GM13976 (cell line): ENCODE measurements at regions of chr5 and their contacts with region 1.

Region 1: DNA sequence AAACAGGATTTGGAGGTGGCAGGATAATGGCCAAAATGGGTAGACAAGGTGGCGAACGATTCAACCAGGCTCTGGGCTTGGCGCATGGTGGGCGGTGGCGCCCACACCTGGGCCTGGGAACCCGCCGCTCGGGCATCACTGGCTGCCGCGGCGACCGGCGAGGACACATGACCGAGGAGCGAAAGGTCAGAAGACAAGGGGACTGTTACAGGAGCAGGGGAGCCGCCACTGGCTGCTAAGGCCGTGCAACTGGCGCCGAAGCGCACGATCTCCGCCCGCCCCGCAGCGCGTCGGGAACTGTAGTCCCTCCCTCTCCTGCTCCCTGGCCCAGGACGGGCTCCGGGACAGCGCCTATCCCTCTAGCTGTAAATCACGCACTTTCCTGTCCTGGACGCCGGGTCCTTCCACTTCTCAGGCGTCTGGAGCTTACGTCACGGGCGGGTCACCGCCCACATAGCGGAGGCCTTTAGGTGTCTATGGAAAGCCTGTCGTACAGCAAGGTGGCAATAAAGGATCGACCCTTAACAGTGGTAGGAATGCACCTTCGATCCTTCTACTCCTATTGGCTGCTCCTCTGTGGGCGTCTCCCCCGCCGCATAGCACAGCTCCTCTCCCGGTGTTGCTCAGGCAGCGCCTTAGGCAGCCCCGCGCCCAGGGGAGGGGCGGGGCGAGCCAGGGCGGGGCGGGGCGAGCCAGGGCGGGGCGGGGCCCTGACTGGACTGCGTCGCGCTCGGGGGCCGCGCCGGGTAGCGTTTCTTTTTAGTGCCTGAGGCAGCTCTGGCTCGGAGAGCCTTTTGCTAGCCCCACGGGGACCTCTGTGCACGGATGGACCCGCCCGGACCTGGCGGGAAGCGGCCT is at the start of gene ICE1:
- DNase-seq: peak; percentile 92
- CTCF ChIP-seq: no peak

Region 2: DNA sequence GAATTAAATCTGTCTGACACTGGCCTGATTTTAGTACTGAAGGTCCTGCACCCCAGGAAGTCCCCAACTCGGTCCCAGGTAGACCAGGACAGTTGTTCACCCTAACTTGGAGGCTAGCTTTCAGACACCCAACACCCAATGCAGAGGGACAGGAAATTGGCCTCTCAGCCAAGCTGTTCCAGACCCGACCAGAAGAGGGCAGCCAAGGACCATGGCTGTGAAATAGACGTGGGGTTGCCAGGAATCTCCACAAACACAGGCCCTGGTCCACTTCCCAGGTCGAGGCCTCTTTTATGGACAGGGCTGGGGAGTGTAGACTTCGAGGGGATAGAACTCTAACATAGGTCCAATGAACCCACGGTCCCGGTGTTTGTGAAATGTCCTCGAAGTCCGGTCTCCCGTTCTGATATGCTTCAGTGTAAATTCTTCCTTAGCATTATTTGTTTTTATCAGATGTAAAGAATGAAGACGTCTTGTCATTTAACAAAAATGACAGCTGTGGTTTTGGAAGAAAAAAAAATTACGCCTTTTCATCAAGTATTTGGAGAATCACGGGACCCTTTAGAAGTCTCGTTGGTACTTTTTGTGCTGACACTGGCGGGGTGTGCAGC is 542.4 kb before region 1 on chr5:
- in situ Hi-C with region 1: loop called (anchors 25 kb)
- DNase-seq: peak; percentile 83
- CTCF ChIP-seq: peak; percentile 92

Region 3: GRCh38 chr5:5141625-5142532 is 280.3 kb before region 1 on chr5:
- in situ Hi-C with region 1: loop called (anchors 10 kb)
- DNase-seq: peak; percentile 53
- CTCF ChIP-seq: peak; percentile 55